ENCODE measurements at regions of chr1 and their contacts with region 1.

Region 1: DNA sequence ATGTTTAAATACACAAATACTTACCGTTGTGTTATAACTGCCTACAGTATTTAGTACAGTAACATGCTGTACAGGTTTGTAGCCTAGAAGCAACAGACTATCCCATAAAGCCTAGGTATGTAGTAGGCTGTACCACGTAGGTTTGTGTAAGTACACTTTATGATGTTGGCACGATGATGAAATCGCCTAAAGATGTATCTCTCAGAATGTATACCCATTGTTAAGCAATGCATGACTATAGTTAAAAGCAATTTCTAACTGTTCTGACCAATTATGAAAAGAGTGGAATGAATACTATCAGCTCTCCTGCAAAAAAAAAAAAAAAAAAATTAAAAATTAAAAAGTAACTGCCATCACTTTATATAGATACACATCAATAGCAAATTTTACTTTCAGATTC is 11.4 kb downstream of the HP1BP3 start:
- DNase-seq: no peak
- H3K4me3 ChIP-seq: no peak overlapping the region
- H3K27ac ChIP-seq: no peak overlapping the region
- H3K4me1 ChIP-seq: no peaks in the 10 kb centered on the region
- H3K27me3 ChIP-seq: no peaks in the 10 kb centered on the region
- CTCF ChIP-seq: no peak

Region 2: GRCh38 chr1:20742671-20743070 is 33.0 kb before region 1 on chr1:
- intact Hi-C with region 1: loop called (anchors 5 kb)
- DNase-seq: no peak
- H3K4me3 ChIP-seq: no peak overlapping the region
- H3K27ac ChIP-seq: no peak overlapping the region
- H3K4me1 ChIP-seq: no peaks in the 10 kb centered on the region
- H3K27me3 ChIP-seq: no peaks in the 10 kb centered on the region
- CTCF ChIP-seq: no peak

Region 3: GRCh38 chr1:20873311-20873710 is 97.6 kb after region 1 on chr1:
- intact Hi-C with region 1: no loop called
- DNase-seq: no peak
- H3K4me3 ChIP-seq: no peak overlapping the region
- H3K27ac ChIP-seq: no peak overlapping the region
- H3K4me1 ChIP-seq: no peaks in the 10 kb centered on the region
- H3K27me3 ChIP-seq: no peaks in the 10 kb centered on the region
- CTCF ChIP-seq: no peak

Region 4: DNA sequence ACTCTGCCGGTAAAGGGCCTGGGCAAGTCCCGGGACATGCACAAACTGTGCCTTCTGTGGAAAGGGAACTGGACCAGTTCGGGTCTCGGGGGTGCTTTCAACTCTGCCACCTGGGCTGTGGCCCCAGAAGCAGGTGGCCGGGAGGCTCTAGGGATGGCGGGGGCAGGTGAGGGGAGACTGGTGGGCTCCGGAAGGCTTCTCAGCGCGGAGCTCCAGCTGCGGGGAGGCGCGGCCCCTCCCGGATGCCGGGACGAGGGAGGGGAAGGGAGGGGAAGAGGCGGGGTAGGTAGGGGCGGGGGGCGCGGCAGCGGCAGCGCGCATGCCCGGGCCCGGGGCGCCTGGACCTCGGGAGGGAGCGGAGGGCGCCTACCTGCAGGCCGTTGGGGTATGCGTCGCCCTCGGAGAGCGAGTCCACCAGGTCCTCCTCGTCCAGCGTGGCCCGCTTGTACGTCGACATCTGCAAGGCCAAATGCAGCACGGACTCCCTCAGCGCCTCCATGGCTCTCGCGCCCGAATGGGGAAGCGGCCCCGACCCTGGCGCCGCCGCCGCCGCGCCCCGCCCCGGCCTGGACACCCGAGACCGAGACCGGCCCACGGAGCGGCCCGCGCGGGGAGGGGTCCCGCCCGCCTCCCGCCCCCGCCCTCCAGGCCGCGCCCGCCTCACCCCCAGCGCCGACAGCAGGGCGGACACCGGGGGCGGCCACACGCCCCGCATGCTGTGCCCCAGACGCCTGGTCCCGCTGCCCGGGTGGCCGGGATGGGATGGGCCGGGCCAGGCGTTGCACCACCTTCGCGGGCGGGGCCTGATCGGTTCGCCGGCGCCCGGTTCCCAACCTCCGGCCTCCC is 514.2 kb after region 1 on chr1 and contains the start of gene ECE1:
- intact Hi-C with region 1: no loop called
- DNase-seq: peak; percentile 64
- H3K4me3 ChIP-seq: peak within 1 kb of the TSS; percentile 55
- H3K27ac ChIP-seq: peak within 1 kb of the TSS; percentile 46
- H3K4me1 ChIP-seq: no peaks in the 10 kb centered on the region
- H3K27me3 ChIP-seq: no peaks in the 10 kb centered on the region
- CTCF ChIP-seq: no peak
- total RNA-seq, gene ECE1: 99.0 to 149 TPM